ENCODE measurements at regions of chr5 and their contacts with region 1.

Region 1: DNA sequence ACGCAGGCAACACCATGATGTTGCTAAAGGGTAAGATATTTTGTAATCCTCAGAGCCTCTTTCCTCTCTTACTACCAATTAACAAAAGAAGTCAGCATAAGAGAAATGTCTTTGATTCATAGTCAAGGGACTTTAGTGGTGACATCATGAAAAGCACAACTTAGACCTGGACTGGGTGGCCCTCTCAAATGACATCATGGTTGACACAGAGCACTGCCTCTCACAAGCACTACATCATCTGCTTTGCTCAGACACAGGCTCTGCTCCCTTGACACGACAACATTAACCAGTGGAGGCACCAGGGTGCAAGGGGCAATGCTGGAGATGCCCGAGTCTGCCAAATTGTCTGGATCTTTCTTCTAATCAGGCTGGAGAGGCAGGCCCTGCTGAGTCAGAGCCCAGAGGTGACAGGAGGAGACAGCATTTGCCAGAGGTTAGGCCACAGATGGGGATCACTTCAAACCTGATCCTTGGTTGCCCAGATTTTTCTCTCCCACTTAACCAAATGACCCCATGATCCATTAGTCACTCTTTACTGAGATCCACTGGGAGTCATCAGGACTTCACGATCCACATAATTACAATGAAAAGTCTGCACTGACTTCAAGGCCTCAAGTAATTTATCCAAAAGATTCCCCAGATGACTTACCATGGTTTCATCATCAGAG is 174.4 kb downstream of the SLIT3 start:
- DNase-seq: no peak
- ATAC-seq: peak in 2 of 8 donors; percentile 23 to 48
- H3K4me3 ChIP-seq: no peak overlapping the region
- H3K27ac ChIP-seq: peak overlapping the region in 1 of 10 donors; percentile 6
- H3K4me1 ChIP-seq: peaks cover 0 to 12% (median 3%) of the 10 kb centered on the region in 9 donors
- H3K27me3 ChIP-seq: no peaks in the 10 kb centered on the region
- CTCF ChIP-seq: no peak

Region 2: GRCh38 chr5:169296419-169297143 is 170.1 kb after region 1 on chr5:
- intact Hi-C with region 1: loop called in 3 of 10 experiments (anchors 10 kb)
- DNase-seq: no peak
- ATAC-seq: peak in 2 of 8 donors; percentile 15 to 29
- H3K4me3 ChIP-seq: no peak overlapping the region
- H3K27ac ChIP-seq: no peak overlapping the region
- H3K4me1 ChIP-seq: peaks cover 0 to 11% (median 5%) of the 10 kb centered on the region in 9 donors
- H3K27me3 ChIP-seq: peaks cover 0 to 30% (median 23%) of the 10 kb centered on the region in 7 donors
- CTCF ChIP-seq: no peak